CD8-positive, alpha-beta memory T cell (primary cell): ENCODE measurements at regions of chr16 and their contacts with region 1.

Region 1: GRCh38 chr16:57519796-57520360 is 16.5 kb downstream of the CCDC102A start:
- DNase-seq: peak; percentile 64 to 86 (median 75)
- H3K4me3 ChIP-seq: no peak overlapping the region
- H3K4me3 Mint-ChIP-seq: no peak overlapping the region
- H3K27ac ChIP-seq: no peak overlapping the region
- H3K27ac Mint-ChIP-seq: peak overlapping the region in 2 of 8 donors; percentile 36 to 72
- H3K4me1 ChIP-seq: peaks cover 8% of the 10 kb centered on the region
- H3K4me1 Mint-ChIP-seq: peaks cover 6 to 13% (median 6%) of the 10 kb centered on the region in 3 donors
- H3K27me3 ChIP-seq: no peaks in the 10 kb centered on the region
- H3K27me3 Mint-ChIP-seq: peaks cover 0 to 4% of the 10 kb centered on the region in 2 donors

Region 2: GRCh38 chr16:57300387-57301125 is 219.3 kb before region 1 on chr16:
- CTCF ChIA-PET with region 1: interaction called, 11 read pairs
- POLR2A ChIA-PET with region 1: no interaction called
- DNase-seq: peak; percentile 96 to 100 (median 99)
- H3K4me3 ChIP-seq: peak overlapping the region; percentile 64
- H3K4me3 Mint-ChIP-seq: no peak overlapping the region
- H3K27ac ChIP-seq: peak overlapping the region; percentile 68
- H3K27ac Mint-ChIP-seq: peak overlapping the region in 1 of 8 donors; percentile 32
- H3K4me1 ChIP-seq: peaks cover 26% of the 10 kb centered on the region
- H3K4me1 Mint-ChIP-seq: peaks cover 15 to 21% (median 19%) of the 10 kb centered on the region in 3 donors
- H3K27me3 ChIP-seq: no peaks in the 10 kb centered on the region
- H3K27me3 Mint-ChIP-seq: peaks cover 2 to 4% of the 10 kb centered on the region in 2 donors

Region 3: GRCh38 chr16:57416122-57416509 is 103.8 kb before region 1 on chr16:
- CTCF ChIA-PET with region 1: interaction called, 54 read pairs
- POLR2A ChIA-PET with region 1: no interaction called
- DNase-seq: no peak
- H3K4me3 ChIP-seq: no peak overlapping the region
- H3K4me3 Mint-ChIP-seq: no peak overlapping the region
- H3K27ac ChIP-seq: no peak overlapping the region
- H3K27ac Mint-ChIP-seq: peak overlapping the region in 1 of 8 donors; percentile 8
- H3K4me1 ChIP-seq: peaks cover 20% of the 10 kb centered on the region
- H3K4me1 Mint-ChIP-seq: peaks cover 14 to 28% (median 18%) of the 10 kb centered on the region in 3 donors
- H3K27me3 ChIP-seq: no peaks in the 10 kb centered on the region
- H3K27me3 Mint-ChIP-seq: peaks cover under 1 to 2% of the 10 kb centered on the region in 2 donors

Region 4: GRCh38 chr16:57422026-57422944 is 97.6 kb before region 1 on chr16:
- CTCF ChIA-PET with region 1: interaction called, 54 read pairs
- POLR2A ChIA-PET with region 1: no interaction called
- DNase-seq: no peak
- H3K4me3 ChIP-seq: no peak overlapping the region
- H3K4me3 Mint-ChIP-seq: no peak overlapping the region
- H3K27ac ChIP-seq: no peak overlapping the region
- H3K27ac Mint-ChIP-seq: no peak overlapping the region
- H3K4me1 ChIP-seq: peaks cover 13% of the 10 kb centered on the region
- H3K4me1 Mint-ChIP-seq: peaks cover 7 to 19% (median 10%) of the 10 kb centered on the region in 3 donors
- H3K27me3 ChIP-seq: no peaks in the 10 kb centered on the region
- H3K27me3 Mint-ChIP-seq: no peaks in the 10 kb centered on the region

Region 5: GRCh38 chr16:57475711-57476339 is 44.1 kb before region 1 on chr16:
- CTCF ChIA-PET with region 1: interaction called, 10 read pairs
- POLR2A ChIA-PET with region 1: interaction called, 3 read pairs
- DNase-seq: peak; percentile 56 to 80 (median 72)
- H3K4me3 ChIP-seq: no peak overlapping the region
- H3K4me3 Mint-ChIP-seq: peak overlapping the region in 5 of 7 donors; percentile 20 to 63 (median 39)
- H3K27ac ChIP-seq: no peak overlapping the region
- H3K27ac Mint-ChIP-seq: peak overlapping the region; percentile 29 to 80 (median 59)
- H3K4me1 ChIP-seq: peaks cover 16% of the 10 kb centered on the region
- H3K4me1 Mint-ChIP-seq: peaks cover 7 to 24% (median 8%) of the 10 kb centered on the region in 3 donors
- H3K27me3 ChIP-seq: no peaks in the 10 kb centered on the region
- H3K27me3 Mint-ChIP-seq: no peaks in the 10 kb centered on the region

Region 6: DNA sequence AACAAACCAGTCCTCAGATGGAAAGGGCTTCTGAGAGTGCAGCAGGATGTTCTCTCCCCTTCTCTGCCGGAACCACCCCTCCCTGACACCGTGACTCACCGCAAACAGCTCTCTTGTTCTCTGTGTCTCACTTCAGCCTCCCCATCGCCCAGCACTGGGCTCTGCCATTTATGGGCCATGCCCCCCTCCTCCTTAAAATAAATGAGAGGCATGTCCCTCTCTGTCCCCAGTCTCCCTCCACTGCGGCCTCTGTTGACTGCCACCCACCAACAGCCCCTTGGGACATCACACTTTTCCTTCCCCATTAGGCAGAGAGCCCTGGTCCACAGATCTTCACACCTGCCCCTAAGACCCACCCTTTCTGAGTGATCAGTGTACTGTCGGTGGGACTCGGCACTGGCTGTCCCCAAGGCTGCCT is 10.2 kb after region 1 on chr16:
- CTCF ChIA-PET with region 1: interaction called, 13 read pairs
- POLR2A ChIA-PET with region 1: interaction called, 6 read pairs
- DNase-seq: peak; percentile 56 to 84 (median 67)
- H3K4me3 ChIP-seq: peak overlapping the region; percentile 56
- H3K4me3 Mint-ChIP-seq: peak overlapping the region; percentile 69 to 90 (median 77)
- H3K27ac ChIP-seq: peak overlapping the region; percentile 66
- H3K27ac Mint-ChIP-seq: peak overlapping the region; percentile 91 to 99 (median 96)
- H3K4me1 ChIP-seq: peaks cover 59% of the 10 kb centered on the region
- H3K4me1 Mint-ChIP-seq: peaks cover 51 to 60% (median 56%) of the 10 kb centered on the region in 3 donors
- H3K27me3 ChIP-seq: no peaks in the 10 kb centered on the region
- H3K27me3 Mint-ChIP-seq: peaks cover 0 to 3% of the 10 kb centered on the region in 2 donors

Region 7: GRCh38 chr16:57535680-57536305 is 15.9 kb after region 1 on chr16:
- CTCF ChIA-PET with region 1: interaction called, 13 read pairs
- POLR2A ChIA-PET with region 1: interaction called, 6 read pairs
- DNase-seq: peak; percentile 89 to 96 (median 92)
- H3K4me3 ChIP-seq: peak overlapping the region; percentile 35
- H3K4me3 Mint-ChIP-seq: peak overlapping the region; percentile 76 to 91 (median 84)
- H3K27ac ChIP-seq: peak overlapping the region; percentile 63
- H3K27ac Mint-ChIP-seq: peak overlapping the region; percentile 91 to 99 (median 98)
- H3K4me1 ChIP-seq: peaks cover 78% of the 10 kb centered on the region
- H3K4me1 Mint-ChIP-seq: peaks cover 66 to 84% (median 68%) of the 10 kb centered on the region in 3 donors
- H3K27me3 ChIP-seq: no peaks in the 10 kb centered on the region
- H3K27me3 Mint-ChIP-seq: peaks cover 0 to 3% of the 10 kb centered on the region in 2 donors

Region 8: DNA sequence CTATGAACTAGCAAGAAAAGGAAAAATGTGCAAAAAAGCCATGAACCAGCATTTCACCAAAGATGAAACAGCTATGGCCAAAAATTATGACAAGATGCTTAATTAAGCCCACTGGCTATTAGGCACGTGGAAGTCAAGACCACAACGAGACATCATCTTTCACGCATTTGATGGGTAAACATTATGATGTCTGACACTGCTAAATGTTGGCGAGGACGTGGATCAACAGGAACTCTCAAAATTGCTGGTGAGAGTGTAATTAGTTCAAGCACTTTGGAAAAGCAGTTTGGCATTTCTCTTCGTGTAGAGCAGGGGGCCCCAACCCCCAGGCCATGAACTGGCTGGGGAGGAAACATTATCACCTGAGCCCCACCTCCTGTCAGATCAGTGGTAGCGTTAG is 69.0 kb after region 1 on chr16:
- CTCF ChIA-PET with region 1: no interaction called
- POLR2A ChIA-PET with region 1: no interaction called
- DNase-seq: no peak
- H3K4me3 ChIP-seq: no peak overlapping the region
- H3K4me3 Mint-ChIP-seq: peak overlapping the region in 6 of 7 donors; percentile 34 to 80 (median 58)
- H3K27ac ChIP-seq: no peak overlapping the region
- H3K27ac Mint-ChIP-seq: peak overlapping the region; percentile 66 to 90 (median 82)
- H3K4me1 ChIP-seq: peaks cover 37% of the 10 kb centered on the region
- H3K4me1 Mint-ChIP-seq: peaks cover 64 to 68% (median 66%) of the 10 kb centered on the region in 3 donors
- H3K27me3 ChIP-seq: no peaks in the 10 kb centered on the region
- H3K27me3 Mint-ChIP-seq: no peaks in the 10 kb centered on the region

Region 9: GRCh38 chr16:57643147-57643874 is 123.4 kb after region 1 on chr16:
- CTCF ChIA-PET with region 1: no interaction called
- POLR2A ChIA-PET with region 1: no interaction called
- DNase-seq: no peak
- H3K4me3 ChIP-seq: no peak overlapping the region
- H3K4me3 Mint-ChIP-seq: no peak overlapping the region
- H3K27ac ChIP-seq: no peak overlapping the region
- H3K27ac Mint-ChIP-seq: peak overlapping the region in 6 of 8 donors; percentile 19 to 50 (median 26)
- H3K4me1 ChIP-seq: peaks cover 7% of the 10 kb centered on the region
- H3K4me1 Mint-ChIP-seq: peaks cover 22 to 47% (median 24%) of the 10 kb centered on the region in 3 donors
- H3K27me3 ChIP-seq: no peaks in the 10 kb centered on the region
- H3K27me3 Mint-ChIP-seq: peaks cover 0 to 2% of the 10 kb centered on the region in 2 donors